ENCODE measurements at regions of chr19 and their contacts with region 1.

Region 1: GRCh38 chr19:10074153-10074552 is 12.0 kb upstream of the SHFL start:
- DNase-seq: peak; percentile 47 to 58 (median 56)
- H3K4me3 ChIP-seq: no peak overlapping the region
- H3K4me3 Mint-ChIP-seq: no peak overlapping the region
- H3K27ac ChIP-seq: no peak overlapping the region
- H3K27ac Mint-ChIP-seq: peak overlapping the region in 2 of 7 donors; percentile 25 to 52
- H3K4me1 ChIP-seq: no peaks in the 10 kb centered on the region
- H3K4me1 Mint-ChIP-seq: peaks cover 0 to 3% (median under 1%) of the 10 kb centered on the region in 4 donors
- H3K27me3 ChIP-seq: no peaks in the 10 kb centered on the region
- H3K27me3 Mint-ChIP-seq: no peaks in the 10 kb centered on the region

Region 2: GRCh38 chr19:10112895-10113591 is 38.9 kb after region 1 on chr19:
- CTCF ChIA-PET with region 1: interaction called, 3 read pairs
- POLR2A ChIA-PET with region 1: interaction called, 4 read pairs
- intact Hi-C with region 1: loop called (anchors 1 kb)
- DNase-seq: peak; percentile 65 to 77 (median 68)
- H3K4me3 ChIP-seq: no peak overlapping the region
- H3K4me3 Mint-ChIP-seq: peak overlapping the region; percentile 55 to 89 (median 78)
- H3K27ac ChIP-seq: peak overlapping the region; percentile 66
- H3K27ac Mint-ChIP-seq: peak overlapping the region; percentile 91 to 97 (median 95)
- H3K4me1 ChIP-seq: peaks cover 56% of the 10 kb centered on the region
- H3K4me1 Mint-ChIP-seq: peaks cover 22 to 74% (median 31%) of the 10 kb centered on the region in 4 donors
- H3K27me3 ChIP-seq: no peaks in the 10 kb centered on the region
- H3K27me3 Mint-ChIP-seq: no peaks in the 10 kb centered on the region